ENCODE measurements at regions of chr1 and their contacts with region 1.

Region 1: GRCh38 chr1:83998498-83999315 is at the start of gene TTLL7:
- DNase-seq: peak in 1 of 2 donors; percentile 88
- H3K4me3 ChIP-seq: peak within 1 kb of the TSS; percentile 82 to 94
- H3K27ac ChIP-seq: peak within 1 kb of the TSS; percentile 97
- H3K4me1 ChIP-seq: peaks cover 0 to 24% of the 10 kb centered on the region in 2 donors
- H3K27me3 ChIP-seq: no peaks in the 10 kb centered on the region
- CTCF ChIP-seq: no peak
- total RNA-seq, gene TTLL7: 20.5 TPM

Region 2: GRCh38 chr1:83959824-83960498 is 38.7 kb before region 1 on chr1:
- intact Hi-C with region 1: loop called (anchors 1 kb)
- DNase-seq: no peak
- H3K4me3 ChIP-seq: no peak overlapping the region
- H3K27ac ChIP-seq: peak overlapping the region; percentile 88
- H3K4me1 ChIP-seq: peaks cover 3 to 48% of the 10 kb centered on the region in 2 donors
- H3K27me3 ChIP-seq: no peaks in the 10 kb centered on the region
- CTCF ChIP-seq: no peak

Region 3: GRCh38 chr1:84122780-84123382 is 124.2 kb after region 1 on chr1:
- intact Hi-C with region 1: loop called (anchors 5 kb)
- DNase-seq: peak in 1 of 2 donors; percentile 69
- H3K4me3 ChIP-seq: no peak overlapping the region
- H3K27ac ChIP-seq: no peak overlapping the region
- H3K4me1 ChIP-seq: no peaks in the 10 kb centered on the region
- H3K27me3 ChIP-seq: no peaks in the 10 kb centered on the region
- CTCF ChIP-seq: peak; percentile 42 to 71 (median 63)

Region 4: DNA sequence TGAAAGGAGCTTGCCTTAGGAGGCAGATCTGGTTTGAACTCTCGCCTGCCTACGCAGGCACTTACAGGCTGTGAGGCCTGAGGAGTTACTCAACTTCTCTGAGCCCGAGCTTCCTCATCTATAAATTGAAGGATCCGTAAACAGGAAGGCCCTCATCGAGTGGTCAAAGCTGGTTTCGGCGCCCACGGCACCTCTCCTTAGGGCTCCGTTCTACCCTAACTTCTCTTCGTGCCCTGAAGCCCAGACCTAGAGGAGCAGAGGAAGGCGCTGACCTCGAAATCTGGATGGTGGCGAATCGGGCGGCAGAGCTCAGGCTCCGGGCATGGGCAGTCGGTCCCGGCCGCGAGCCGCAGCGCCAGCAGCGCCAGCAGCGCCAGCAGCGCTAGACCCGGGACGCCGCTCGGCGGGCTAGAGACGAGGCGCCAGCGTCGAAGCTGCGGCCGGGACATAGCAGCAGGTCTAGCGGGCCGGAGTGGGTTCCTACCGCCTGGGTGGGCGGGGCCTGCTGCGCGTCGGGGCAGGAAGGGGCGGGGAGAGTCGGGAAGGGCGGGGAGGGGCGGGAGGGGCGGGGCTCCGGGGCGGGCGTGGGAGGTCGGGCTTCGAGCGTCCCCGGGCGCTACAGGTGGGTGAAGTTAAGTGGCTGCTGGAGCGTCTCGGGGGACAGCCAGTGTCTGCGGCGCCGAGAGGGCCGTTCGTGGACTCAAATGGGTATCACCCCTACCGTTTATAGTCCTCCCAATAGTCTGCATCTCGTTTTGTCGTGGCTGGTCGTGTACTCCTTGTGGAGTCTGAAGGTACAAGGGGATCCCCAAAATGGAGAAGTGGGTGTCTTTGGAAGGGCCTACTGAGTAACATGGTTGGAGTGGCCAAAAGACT is 575.5 kb after region 1 on chr1 and contains the start of gene CTBS:
- intact Hi-C with region 1: loop called (anchors 5 kb)
- DNase-seq: peak; percentile 33 to 91
- H3K4me3 ChIP-seq: peak within 1 kb of the TSS; percentile 87 to 89
- H3K27ac ChIP-seq: peak within 1 kb of the TSS; percentile 99 to 100
- H3K4me1 ChIP-seq: peaks cover 3 to 13% of the 10 kb centered on the region in 2 donors
- H3K27me3 ChIP-seq: no peaks in the 10 kb centered on the region
- CTCF ChIP-seq: no peak
- total RNA-seq, gene CTBS: 14.5 TPM

Region 5: GRCh38 chr1:84698151-84699110 is 699.7 kb after region 1 on chr1:
- intact Hi-C with region 1: loop called (anchors 5 kb)
- DNase-seq: no peak
- H3K4me3 ChIP-seq: peak overlapping the region in 1 of 2 donors; percentile 17
- H3K27ac ChIP-seq: peak overlapping the region; percentile 73 to 85
- H3K4me1 ChIP-seq: peaks cover 11 to 26% of the 10 kb centered on the region in 2 donors
- H3K27me3 ChIP-seq: no peaks in the 10 kb centered on the region
- CTCF ChIP-seq: no peak